ENCODE measurements at regions of chr20 and their contacts with region 1.

Region 1: GRCh38 chr20:31308535-31309162 is at the start of gene DEFB116:
- DNase-seq: no peak
- ATAC-seq: no peak
- H3K4me3 ChIP-seq: no peak within 1 kb of the TSS
- H3K27ac ChIP-seq: no peak within 1 kb of the TSS
- H3K4me1 ChIP-seq: no peaks in the 10 kb centered on the region
- H3K27me3 ChIP-seq: no peaks in the 10 kb centered on the region
- CTCF ChIP-seq: no peak
- total RNA-seq, gene DEFB116: not detected

Region 2: DNA sequence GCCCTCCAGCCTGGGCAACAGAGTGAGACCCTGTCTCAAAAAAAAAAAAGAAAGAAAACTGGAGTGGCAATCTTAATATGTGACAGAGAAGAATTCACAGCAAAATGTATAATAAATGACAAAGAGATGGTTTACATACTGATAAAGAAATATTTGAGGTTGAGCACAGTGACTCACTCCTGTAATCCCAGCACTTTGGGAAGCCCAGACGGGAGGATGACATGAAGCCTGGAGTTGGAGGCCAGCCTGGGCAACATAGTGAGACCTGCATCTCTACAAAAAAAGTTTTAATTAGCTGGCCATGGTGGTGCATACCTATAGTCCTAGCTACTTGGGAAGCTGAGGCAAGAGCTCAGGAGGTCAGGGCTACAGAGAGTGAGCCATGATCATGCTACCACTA is 47.3 kb after region 1 on chr20:
- CTCF ChIA-PET with region 1: no interaction called
- POLR2A ChIA-PET with region 1: no interaction called
- in situ Hi-C with region 1: no loop called
- intact Hi-C with region 1: loop called (anchors 5 kb)
- DNase-seq: no peak
- ATAC-seq: no peak
- H3K4me3 ChIP-seq: no peak overlapping the region
- H3K27ac ChIP-seq: no peak overlapping the region
- H3K4me1 ChIP-seq: no peaks in the 10 kb centered on the region
- H3K27me3 ChIP-seq: peaks cover 7% of the 10 kb centered on the region; the same call in 1 of the 2 replicates
- CTCF ChIP-seq: no peak

Region 3: GRCh38 chr20:31508517-31509244 is 200.0 kb after region 1 on chr20:
- CTCF ChIA-PET with region 1: no interaction called
- POLR2A ChIA-PET with region 1: no interaction called
- in situ Hi-C with region 1: no loop called
- intact Hi-C with region 1: no loop called
- DNase-seq: no peak
- ATAC-seq: no peak
- H3K4me3 ChIP-seq: no peak overlapping the region
- H3K27ac ChIP-seq: no peak overlapping the region
- H3K4me1 ChIP-seq: no peaks in the 10 kb centered on the region
- H3K27me3 ChIP-seq: no peaks in the 10 kb centered on the region
- CTCF ChIP-seq: no peak